HCT116 (cell line): ENCODE measurements at regions of chr11 and their contacts with region 1.

Region 1: DNA sequence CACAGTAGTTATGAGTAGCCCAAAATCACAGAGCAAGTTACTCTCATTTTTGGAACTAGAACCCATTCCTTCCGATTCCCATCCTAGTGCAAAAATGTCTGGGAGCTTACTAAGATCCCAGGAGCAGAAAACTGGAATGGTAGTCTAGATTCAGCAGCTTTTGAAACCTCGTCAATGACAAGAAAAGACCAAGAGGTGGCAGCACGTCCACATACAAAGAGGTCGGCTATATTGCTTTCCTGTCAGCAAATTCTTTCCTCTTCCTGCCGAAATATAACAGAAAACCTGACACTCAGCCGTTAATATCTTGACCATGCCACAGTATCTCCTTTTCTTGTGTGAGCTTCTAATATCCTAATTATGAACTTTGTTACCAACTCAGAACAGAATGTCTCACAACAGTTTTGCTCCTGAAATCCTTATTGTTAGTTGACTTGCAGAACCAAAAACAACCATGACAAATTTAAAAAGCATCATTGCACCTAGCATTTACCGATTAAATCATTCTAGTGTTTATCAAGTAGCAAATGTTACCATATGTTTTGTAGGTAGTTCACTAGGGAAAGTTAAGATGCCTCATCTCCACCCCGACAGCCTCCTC is 92.8 kb upstream of the OR9G4 start:
- DNase-seq: peak; percentile 27
- ATAC-seq: peak; percentile 57
- H3K4me3 ChIP-seq: no peak overlapping the region
- H3K27ac ChIP-seq: no peak overlapping the region
- H3K4me1 ChIP-seq: no peaks in the 10 kb centered on the region
- H3K27me3 ChIP-seq: no peaks in the 10 kb centered on the region
- CTCF ChIP-seq: peak; percentile 35 to 65 (median 54); a peak in 5 of 6 replicates
- POLR2A ChIP-seq: no peak
- RAD21 ChIP-seq: peak; percentile 68

Region 2: DNA sequence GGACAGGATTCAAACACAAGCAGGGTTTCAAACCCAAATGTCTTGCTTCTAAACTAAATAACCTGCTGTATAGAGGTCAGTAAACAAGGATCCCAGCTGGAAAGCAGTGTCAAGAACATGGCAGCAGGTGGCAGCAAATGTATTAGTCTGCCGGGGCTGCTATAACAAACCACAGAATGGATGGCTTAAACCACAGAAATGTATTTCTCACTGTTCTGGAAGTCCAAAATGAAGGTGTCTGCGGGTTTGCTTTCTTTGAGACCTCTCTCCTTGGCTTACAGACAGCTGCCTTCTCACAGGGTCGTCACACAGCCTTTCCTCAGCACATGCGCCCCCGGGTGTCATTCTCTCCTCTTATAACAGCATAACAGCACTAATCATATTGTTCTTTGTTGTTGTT is 275.3 kb after region 1 on chr11:
- CTCF ChIA-PET with region 1: no interaction called
- POLR2A ChIA-PET with region 1: no interaction called
- RAD21 ChIA-PET with region 1: no interaction called
- intact Hi-C with region 1: loop called (anchors 5 kb)
- DNase-seq: peak; percentile 19
- ATAC-seq: peak; percentile 88
- H3K4me3 ChIP-seq: no peak overlapping the region
- H3K27ac ChIP-seq: no peak overlapping the region
- H3K4me1 ChIP-seq: no peaks in the 10 kb centered on the region
- H3K27me3 ChIP-seq: no peaks in the 10 kb centered on the region
- CTCF ChIP-seq: peak; percentile 48 to 71 (median 59); a peak in 5 of 6 replicates
- POLR2A ChIP-seq: no peak
- RAD21 ChIP-seq: peak; percentile 72

Region 3: DNA sequence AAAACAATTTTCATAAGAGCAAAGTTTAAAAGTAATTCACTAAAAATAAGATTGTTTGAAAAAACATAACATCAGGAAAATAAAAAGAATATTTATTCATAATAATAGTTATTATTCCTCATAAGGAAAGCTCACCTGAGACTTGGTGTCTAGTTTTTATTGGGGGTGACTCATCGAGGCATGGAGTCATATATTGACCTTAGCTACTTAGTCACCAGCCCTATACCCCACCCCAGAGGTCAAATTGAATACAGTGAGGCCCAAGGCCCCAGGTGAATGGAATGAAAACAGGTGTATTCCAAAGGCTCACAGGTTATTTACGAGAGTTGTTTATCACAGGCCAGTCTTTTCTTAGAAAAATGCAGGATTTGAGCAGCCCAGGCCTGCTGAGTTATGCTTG is 1818.1 kb after region 1 on chr11:
- CTCF ChIA-PET with region 1: no interaction called
- POLR2A ChIA-PET with region 1: no interaction called
- RAD21 ChIA-PET with region 1: no interaction called
- intact Hi-C with region 1: no loop called
- DNase-seq: peak; percentile 59
- ATAC-seq: peak; percentile 84
- H3K4me3 ChIP-seq: peak overlapping the region in 1 of 2 experiments; percentile 25; a peak in 1 of 4 replicates
- H3K27ac ChIP-seq: no peak overlapping the region
- H3K4me1 ChIP-seq: peaks cover 22 to 26% of the 10 kb centered on the region in 2 experiments
- H3K27me3 ChIP-seq: no peaks in the 10 kb centered on the region
- CTCF ChIP-seq: no peak
- POLR2A ChIP-seq: no peak
- RAD21 ChIP-seq: no peak